Sigmoid colon (tissue), 7 donors: ENCODE measurements at regions of chr3 and their contacts with region 1.

Region 1: DNA sequence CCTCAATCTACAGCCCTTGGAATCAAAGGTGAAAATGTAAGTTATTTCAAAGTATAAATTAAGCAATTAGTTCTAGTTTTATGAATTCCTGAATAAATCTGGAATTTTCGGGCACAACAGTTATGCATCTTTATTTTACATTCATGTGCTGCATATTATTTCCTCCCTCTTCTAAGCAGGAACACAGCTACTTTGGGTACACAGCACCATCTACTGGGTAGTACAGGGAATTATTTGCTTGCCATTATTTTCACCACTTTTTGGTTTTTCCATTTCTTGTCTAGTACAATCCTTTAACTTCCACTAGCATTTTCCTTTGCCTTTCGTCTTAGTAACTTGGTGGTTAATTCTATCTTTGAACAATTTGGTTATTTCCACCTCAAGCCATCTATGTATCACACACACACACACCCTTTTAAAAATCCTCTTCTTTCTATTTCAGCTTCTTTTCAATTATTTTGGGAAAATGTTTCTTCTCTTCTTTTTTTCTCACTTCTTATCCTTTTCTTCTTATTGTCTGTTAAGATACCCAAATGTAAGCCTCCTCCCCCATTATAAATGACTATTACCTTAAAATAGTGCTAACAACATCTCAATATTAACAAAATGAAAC is 451.0 kb downstream of the MFSD1 start:
- DNase-seq: no peak
- H3K4me3 ChIP-seq: no peak overlapping the region
- H3K27ac ChIP-seq: no peak overlapping the region
- H3K4me1 ChIP-seq: no peaks in the 10 kb centered on the region
- H3K27me3 ChIP-seq: no peaks in the 10 kb centered on the region
- CTCF ChIP-seq: peak in 1 of 4 experiments; percentile 30
- EP300 ChIP-seq: no peak
- POLR2A ChIP-seq: no peak

Region 2: DNA sequence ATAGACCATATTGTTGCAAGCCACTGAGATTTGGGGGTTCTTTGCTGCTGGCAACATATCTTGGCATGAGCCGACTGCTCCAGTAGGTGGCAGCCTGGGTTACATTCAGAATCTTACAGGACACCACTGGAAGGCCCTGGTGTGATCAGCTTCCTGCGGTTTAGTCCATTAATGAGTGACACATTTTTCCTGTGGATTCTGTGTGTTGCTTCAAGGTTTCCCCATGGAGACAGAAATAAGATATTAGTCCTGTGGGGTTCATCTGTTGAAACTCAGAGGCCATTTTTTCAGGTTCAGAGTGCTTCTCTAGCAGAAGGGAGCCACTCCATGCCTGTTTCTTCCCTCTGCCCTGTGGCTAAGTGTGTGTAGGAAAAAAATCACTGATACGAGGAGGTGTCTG is 334.9 kb before region 1 on chr3:
- intact Hi-C with region 1: loop called (anchors 10 kb)
- DNase-seq: no peak
- H3K4me3 ChIP-seq: no peak overlapping the region
- H3K27ac ChIP-seq: no peak overlapping the region
- H3K4me1 ChIP-seq: no peaks in the 10 kb centered on the region
- H3K27me3 ChIP-seq: no peaks in the 10 kb centered on the region
- CTCF ChIP-seq: no peak
- EP300 ChIP-seq: no peak
- POLR2A ChIP-seq: no peak

Region 3: GRCh38 chr3:159062734-159063410 is 190.0 kb before region 1 on chr3:
- intact Hi-C with region 1: no loop called
- DNase-seq: no peak
- H3K4me3 ChIP-seq: no peak overlapping the region
- H3K27ac ChIP-seq: no peak overlapping the region
- H3K4me1 ChIP-seq: no peaks in the 10 kb centered on the region
- H3K27me3 ChIP-seq: no peaks in the 10 kb centered on the region
- CTCF ChIP-seq: no peak
- EP300 ChIP-seq: no peak
- POLR2A ChIP-seq: no peak

Region 4: DNA sequence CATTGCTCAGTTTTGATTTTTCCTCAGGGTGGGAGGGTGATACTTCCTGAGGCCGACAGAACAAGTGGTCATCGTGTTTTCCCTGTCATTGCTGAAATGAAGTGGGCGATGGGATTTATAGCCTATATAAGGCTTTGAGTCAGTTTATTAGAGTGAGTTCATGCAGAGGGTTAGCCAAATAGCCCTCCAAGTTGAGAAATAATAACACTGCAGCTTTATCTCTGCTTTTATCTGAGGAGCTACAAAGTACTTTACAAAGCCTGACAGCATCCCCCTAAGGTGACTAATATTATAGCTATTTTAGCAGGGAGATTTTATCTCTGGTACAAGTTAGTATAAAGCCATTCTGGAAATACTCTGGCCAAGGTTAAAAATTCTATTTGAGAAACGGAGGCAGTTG is 61.4 kb before region 1 on chr3:
- intact Hi-C with region 1: no loop called
- DNase-seq: no peak
- H3K4me3 ChIP-seq: no peak overlapping the region
- H3K27ac ChIP-seq: no peak overlapping the region
- H3K4me1 ChIP-seq: no peaks in the 10 kb centered on the region
- H3K27me3 ChIP-seq: no peaks in the 10 kb centered on the region
- CTCF ChIP-seq: no peak
- EP300 ChIP-seq: no peak
- POLR2A ChIP-seq: no peak

Region 5: GRCh38 chr3:159565319-159565718 is 312.4 kb after region 1 on chr3:
- intact Hi-C with region 1: no loop called
- DNase-seq: no peak
- H3K4me3 ChIP-seq: no peak overlapping the region
- H3K27ac ChIP-seq: no peak overlapping the region
- H3K4me1 ChIP-seq: no peaks in the 10 kb centered on the region
- H3K27me3 ChIP-seq: no peaks in the 10 kb centered on the region
- CTCF ChIP-seq: no peak
- EP300 ChIP-seq: no peak
- POLR2A ChIP-seq: no peak